ENCODE measurements at regions of chr19 and their contacts with region 1.

Region 1: DNA sequence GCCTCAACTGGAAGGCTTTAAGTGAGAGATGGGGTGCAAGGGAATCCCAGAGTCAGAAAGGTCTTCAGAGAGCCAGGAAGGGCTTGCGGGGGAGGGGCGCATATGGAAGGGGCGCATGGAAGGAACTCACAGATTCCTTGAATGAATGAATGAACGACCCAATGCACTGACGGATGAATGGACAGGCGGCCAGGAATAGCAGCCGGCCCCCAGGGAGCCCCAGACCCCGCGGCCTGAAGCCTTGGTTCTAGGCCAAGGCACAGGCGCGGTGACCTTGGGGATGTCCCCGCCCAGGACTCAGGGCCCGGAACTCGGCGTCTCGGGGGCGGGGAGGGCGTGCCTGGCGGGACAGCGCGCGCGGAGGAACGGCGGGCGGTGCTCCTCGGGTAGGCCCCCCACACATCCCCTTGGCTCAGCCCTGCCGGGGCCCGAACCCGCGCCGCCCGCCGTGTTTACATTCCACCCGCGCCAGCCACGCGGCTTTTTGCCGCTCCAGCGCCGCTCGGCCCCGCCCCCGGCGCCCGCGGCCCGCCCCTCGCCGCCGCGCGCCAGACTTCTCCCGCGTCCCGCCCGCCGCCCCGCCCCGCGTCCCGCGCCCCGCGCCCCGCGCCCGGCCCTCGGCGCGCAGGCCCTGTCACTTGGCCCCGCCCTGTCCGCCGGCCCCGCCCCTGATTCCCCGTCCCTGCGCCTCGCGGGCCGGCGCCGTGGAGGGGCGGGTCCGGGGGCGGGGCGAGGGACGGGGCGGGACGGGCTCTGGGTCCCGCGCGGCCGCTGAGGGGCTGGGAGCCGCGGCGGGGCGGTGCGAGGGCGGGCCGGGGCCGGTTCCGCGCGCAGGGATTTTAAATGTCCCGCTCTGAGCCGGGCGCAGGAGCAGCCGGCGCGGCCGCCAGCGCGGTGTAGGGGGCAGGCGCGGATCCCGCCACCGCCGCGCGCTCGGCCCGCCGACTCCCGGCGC is at the start of gene CCNE1:
- DNase-seq: peak; percentile 81 to 86
- ATAC-seq: peak; percentile 93 to 94
- H3K4me3 ChIP-seq: peak within 1 kb of the TSS; percentile 58 to 67 (median 61)
- H3K27ac ChIP-seq: peak within 1 kb of the TSS; percentile 46 to 72 (median 60)
- H3K4me1 ChIP-seq: no peaks in the 10 kb centered on the region
- H3K27me3 ChIP-seq: no peaks in the 10 kb centered on the region
- CTCF ChIP-seq: no peak
- POLR2A ChIP-seq: peak; percentile 27 to 49
- total RNA-seq, gene CCNE1: 2.9 to 7.3 (median 4.5) TPM

Region 2: DNA sequence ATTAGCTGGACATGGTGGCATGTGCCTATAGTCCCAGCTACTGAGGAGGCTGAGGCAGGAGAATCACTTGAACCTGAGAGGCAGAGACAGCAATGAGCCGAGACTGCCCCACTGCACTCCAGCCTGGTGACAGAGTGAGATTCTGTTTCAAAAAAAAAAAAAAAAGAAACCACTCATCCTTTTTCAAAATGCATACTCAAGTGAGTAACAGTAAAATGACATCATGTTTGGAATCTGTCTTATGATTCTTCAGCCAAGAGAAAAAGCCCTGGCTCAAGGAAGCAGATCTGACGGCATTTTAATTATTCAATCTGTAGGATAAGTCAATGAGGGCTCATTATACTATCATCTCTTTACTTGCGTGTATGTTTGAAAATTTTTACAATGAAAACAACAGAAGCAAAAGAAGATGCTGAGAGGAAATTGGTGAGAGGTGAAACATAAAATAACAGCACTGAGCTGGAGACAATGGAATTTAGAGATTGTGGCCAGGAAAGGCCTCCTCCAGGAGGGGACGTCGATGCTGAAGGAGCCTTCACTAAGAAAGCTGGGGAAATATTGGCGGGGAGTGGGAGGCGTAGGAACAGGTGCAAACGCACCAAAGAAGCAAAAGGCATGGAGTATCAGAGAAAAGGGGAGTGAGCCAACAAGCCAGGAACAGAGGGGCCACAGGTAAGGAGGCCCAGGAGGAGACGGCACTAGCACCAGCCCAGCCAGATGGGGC is 12.5 kb before region 1 on chr19:
- in situ Hi-C with region 1: no loop called
- intact Hi-C with region 1: no loop called
- DNase-seq: no peak
- ATAC-seq: no peak
- H3K4me3 ChIP-seq: no peak overlapping the region
- H3K27ac ChIP-seq: no peak overlapping the region
- H3K4me1 ChIP-seq: no peaks in the 10 kb centered on the region
- H3K27me3 ChIP-seq: no peaks in the 10 kb centered on the region
- CTCF ChIP-seq: no peak
- POLR2A ChIP-seq: no peak

Region 3: DNA sequence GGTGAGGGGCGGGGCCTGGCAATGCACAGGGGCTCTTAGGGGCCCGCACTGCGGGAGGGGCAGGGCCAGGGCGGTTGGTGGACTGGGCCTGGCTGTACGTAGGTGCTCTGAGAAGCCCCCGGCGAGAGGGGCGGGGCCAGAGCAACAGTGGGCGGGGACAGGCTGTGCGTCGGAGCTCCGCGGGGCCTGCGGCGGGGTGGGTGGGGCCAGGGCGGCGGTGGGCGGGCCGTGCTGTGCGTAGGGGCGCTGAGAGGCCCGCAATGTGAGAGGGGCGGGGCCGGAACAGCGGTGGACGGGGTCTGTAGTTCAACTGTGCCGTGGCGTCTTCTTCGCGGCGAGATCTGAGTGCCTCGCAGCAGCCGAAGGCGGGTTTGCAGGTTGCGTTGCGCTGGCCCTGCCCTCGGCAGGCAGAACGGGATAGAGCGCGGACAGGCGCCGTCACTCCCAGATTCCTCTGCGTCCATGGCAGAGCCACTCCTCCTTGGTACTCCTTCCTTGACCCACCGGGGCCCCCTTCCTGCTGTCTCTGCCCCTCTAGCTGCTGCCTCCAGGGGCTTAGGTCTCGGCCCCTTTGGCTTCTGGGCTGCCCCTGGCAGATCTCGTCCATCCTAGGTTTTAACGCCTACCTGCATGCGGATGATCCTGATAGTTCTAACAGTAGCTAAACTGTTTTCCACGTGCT is 33.6 kb after region 1 on chr19:
- in situ Hi-C with region 1: no loop called
- intact Hi-C with region 1: loop called (anchors 1 kb)
- DNase-seq: peak; percentile 86 to 90
- ATAC-seq: peak; percentile 86 to 89
- H3K4me3 ChIP-seq: peak overlapping the region; percentile 67 to 88 (median 74)
- H3K27ac ChIP-seq: peak overlapping the region; percentile 76 to 92 (median 90)
- H3K4me1 ChIP-seq: peaks cover 12 to 15% of the 10 kb centered on the region in 2 donors
- H3K27me3 ChIP-seq: peaks cover 0 to 8% (median 7%) of the 10 kb centered on the region in 3 donors
- CTCF ChIP-seq: peak in 1 of 5 experiments; percentile 9
- POLR2A ChIP-seq: peak; percentile 9 to 50

Region 4: GRCh38 chr19:29941828-29942403 is 130.5 kb after region 1 on chr19 and contains the start of gene URI1:
- in situ Hi-C with region 1: no loop called
- intact Hi-C with region 1: loop called (anchors 1 kb)
- DNase-seq: peak; percentile 80 to 87
- ATAC-seq: peak; percentile 93 to 94
- H3K4me3 ChIP-seq: peak within 1 kb of the TSS; percentile 65 to 88 (median 78)
- H3K27ac ChIP-seq: peak within 1 kb of the TSS; percentile 70 to 87 (median 80)
- H3K4me1 ChIP-seq: peaks cover 24 to 25% of the 10 kb centered on the region in 2 donors
- H3K27me3 ChIP-seq: no peaks in the 10 kb centered on the region
- CTCF ChIP-seq: no peak
- POLR2A ChIP-seq: peak; percentile 74 to 84
- total RNA-seq, gene URI1: 37.4 to 84.1 (median 59.2) TPM

Region 5: DNA sequence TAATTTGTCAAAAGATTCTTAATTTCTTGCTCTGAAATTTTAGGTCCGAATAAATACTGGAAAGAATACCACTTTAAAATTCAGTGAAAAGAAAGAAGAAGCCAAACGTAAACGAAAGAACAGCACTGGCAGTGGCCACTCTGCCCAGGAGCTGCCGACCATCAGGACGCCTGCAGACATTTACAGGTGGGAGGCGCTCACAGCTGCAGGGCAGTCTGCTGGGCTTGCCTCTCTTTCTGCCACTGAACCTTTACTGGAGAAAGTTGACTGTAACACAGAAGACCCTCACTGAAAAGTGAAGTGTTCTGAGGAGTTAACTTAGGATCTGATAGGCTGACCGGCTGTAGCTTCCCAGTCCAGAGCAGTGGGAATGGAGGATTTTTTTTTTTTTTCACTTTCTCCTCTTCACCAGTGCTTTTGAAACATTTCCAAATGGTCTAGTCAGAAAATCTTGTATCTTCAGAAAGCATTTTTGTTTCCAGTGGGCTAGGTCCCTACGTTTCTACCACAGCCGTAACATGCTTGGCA is 199.7 kb after region 1 on chr19:
- in situ Hi-C with region 1: no loop called
- intact Hi-C with region 1: no loop called
- DNase-seq: no peak
- ATAC-seq: no peak
- H3K4me3 ChIP-seq: no peak overlapping the region
- H3K27ac ChIP-seq: no peak overlapping the region
- H3K4me1 ChIP-seq: no peaks in the 10 kb centered on the region
- H3K27me3 ChIP-seq: no peaks in the 10 kb centered on the region
- CTCF ChIP-seq: no peak
- POLR2A ChIP-seq: no peak

Region 6: GRCh38 chr19:30253581-30253996 is 442.2 kb after region 1 on chr19:
- in situ Hi-C with region 1: no loop called
- intact Hi-C with region 1: no loop called
- DNase-seq: no peak
- ATAC-seq: no peak
- H3K4me3 ChIP-seq: no peak overlapping the region
- H3K27ac ChIP-seq: no peak overlapping the region
- H3K4me1 ChIP-seq: no peaks in the 10 kb centered on the region
- H3K27me3 ChIP-seq: peaks cover 6 to 36% (median 7%) of the 10 kb centered on the region in 3 donors
- CTCF ChIP-seq: no peak
- POLR2A ChIP-seq: no peak

Measured in gastrocnemius medialis (tissue), 4 donors.